ENCODE measurements at regions of chr11 and their contacts with region 1.

Region 1: DNA sequence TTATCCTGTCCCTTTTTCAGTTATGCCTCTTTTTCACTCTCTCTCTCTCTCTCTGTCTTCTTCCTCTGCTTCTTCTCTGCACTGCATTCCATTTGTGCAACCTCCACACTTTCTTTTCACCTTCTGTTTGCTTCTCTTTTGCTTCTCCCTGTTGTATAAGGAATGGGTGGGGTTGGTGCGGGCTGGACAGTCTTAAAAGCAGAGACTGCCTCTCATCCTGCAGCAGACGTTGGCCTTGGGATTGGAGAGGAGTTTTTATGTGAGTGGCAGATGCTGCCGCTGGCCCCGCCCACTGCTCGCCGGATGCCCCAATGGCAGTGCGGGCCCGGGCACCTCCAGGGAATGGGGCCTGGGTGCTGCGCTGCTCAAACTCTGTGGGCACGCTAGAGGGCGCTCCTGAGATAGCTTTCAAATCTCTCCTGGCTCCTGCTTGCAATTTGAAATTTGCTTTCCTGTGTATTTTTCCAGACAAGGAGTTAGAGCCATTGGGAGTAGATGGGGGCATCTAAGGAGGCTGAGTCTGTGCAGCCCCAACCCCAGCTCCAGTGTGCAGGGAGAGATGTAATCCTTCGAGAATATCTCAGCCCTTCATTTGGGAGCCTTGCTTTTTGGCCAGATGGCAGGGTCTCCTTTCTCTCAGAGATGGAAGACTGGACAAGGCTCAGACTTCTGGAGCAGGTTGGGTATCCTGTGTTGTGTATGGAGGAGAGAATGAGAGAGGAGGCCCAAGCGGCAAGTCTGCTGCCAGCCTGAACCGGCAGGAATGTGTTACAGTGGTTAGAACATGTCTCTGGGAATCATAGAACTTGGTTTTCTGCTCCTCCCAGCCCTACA is 81.2 kb downstream of the GRAMD1B start:
- DNase-seq: peak; percentile 88 to 96
- H3K4me3 ChIP-seq: no peak overlapping the region
- H3K27ac ChIP-seq: no peak overlapping the region
- H3K4me1 ChIP-seq: peaks cover 0 to 6% (median 0%) of the 10 kb centered on the region in 4 donors
- H3K27me3 ChIP-seq: no peaks in the 10 kb centered on the region
- CTCF ChIP-seq: peak in 5 of 7 experiments; percentile 70 to 78 (median 76)
- EP300 ChIP-seq: no peak
- POLR2A ChIP-seq: no peak

Region 2: GRCh38 chr11:123719452-123719851 is 208.2 kb after region 1 on chr11:
- intact Hi-C with region 1: loop called (anchors 10 kb)
- DNase-seq: no peak
- H3K4me3 ChIP-seq: no peak overlapping the region
- H3K27ac ChIP-seq: no peak overlapping the region
- H3K4me1 ChIP-seq: no peaks in the 10 kb centered on the region
- H3K27me3 ChIP-seq: peaks cover 0 to 4% (median 0%) of the 10 kb centered on the region in 3 donors
- CTCF ChIP-seq: no peak
- EP300 ChIP-seq: no peak
- POLR2A ChIP-seq: no peak